Common myeloid progenitor, CD34-positive (primary cell): ENCODE measurements at regions of chr2 and their contacts with region 1.

Region 1: GRCh38 chr2:230762317-230762896 is 49.8 kb downstream of the CAB39 start:
- DNase-seq: peak; percentile 39 to 49 (median 44)
- H3K4me3 ChIP-seq: no peak overlapping the region
- H3K27ac ChIP-seq: no peak overlapping the region
- H3K4me1 ChIP-seq: peaks cover 5 to 25% (median 13%) of the 10 kb centered on the region in 4 experiments
- H3K27me3 ChIP-seq: no peaks in the 10 kb centered on the region

Region 2: DNA sequence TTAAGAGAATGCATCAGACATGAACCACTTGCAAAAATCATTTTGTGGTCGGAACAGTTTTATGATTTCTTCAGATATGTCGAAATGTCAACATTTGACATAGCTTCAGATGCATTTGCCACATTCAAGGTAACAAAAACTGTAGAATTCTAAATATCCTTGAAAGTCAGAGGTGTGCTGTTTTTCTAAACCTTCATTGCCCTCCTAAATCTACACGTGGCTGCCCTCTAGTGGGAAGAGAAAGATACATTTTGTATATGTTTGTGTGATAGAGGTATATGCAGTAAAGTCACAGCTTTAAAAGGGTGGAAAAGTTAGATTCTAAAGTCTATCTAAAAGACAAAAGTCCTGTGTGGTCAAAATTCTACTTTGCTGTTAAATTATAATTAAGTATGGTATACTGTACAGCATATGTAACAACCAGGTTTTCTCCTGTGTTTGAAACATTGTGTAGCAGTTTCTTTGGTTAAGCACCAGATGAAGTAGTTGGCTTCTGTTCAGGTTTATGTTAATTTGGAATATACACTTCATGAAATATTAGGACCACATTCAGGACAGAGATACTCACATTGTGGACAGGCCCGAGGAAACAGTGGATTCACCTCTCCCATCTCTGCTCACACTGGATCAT is 36.5 kb after region 1 on chr2:
- CTCF ChIA-PET with region 1: interaction called, 12 read pairs
- POLR2A ChIA-PET with region 1: no interaction called
- DNase-seq: peak; percentile 50 to 72 (median 63)
- H3K4me3 ChIP-seq: no peak overlapping the region
- H3K27ac ChIP-seq: no peak overlapping the region
- H3K4me1 ChIP-seq: peaks cover 7 to 25% (median 19%) of the 10 kb centered on the region in 4 experiments
- H3K27me3 ChIP-seq: no peaks in the 10 kb centered on the region

Region 3: DNA sequence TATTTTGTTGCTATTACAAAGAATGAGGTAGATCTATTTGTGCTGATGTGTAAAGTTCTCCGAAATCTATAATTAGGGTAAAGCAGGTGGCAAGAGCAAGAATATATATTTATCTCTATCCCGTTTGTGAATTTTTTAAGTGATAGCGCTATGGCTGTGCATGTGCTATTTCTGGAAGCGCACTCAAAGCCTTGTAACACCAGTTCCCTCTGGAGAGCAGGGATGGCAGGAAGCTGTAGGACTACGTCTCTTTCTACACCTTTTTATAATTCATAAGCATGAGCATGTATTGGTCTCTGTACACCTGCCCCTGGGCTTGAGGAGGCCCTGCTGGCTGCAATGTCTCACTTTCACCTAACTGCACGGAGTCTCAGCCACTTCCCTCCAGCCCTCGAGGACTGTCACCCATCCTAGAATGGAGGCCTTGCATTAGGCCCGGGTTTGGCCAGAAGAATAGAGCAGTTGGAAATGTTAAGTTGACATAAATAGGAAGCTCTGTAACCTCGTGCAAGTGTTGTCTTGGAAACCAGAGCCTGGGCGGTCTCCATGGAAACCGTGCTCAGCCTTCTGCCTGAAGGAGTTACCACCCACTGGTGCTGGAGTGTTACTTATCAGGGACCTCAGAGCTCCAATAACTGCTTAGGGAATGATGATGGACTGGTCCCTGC is 123.2 kb after region 1 on chr2:
- CTCF ChIA-PET with region 1: no interaction called
- POLR2A ChIA-PET with region 1: no interaction called
- DNase-seq: peak; percentile 87 to 96 (median 96)
- H3K4me3 ChIP-seq: peak overlapping the region in 1 of 7 experiments; percentile 4
- H3K27ac ChIP-seq: peak overlapping the region in 1 of 2 experiments; percentile 65
- H3K4me1 ChIP-seq: peaks cover 2 to 16% (median 12%) of the 10 kb centered on the region in 4 experiments
- H3K27me3 ChIP-seq: no peaks in the 10 kb centered on the region

Region 4: GRCh38 chr2:230956827-230957755 is 194.7 kb after region 1 on chr2:
- CTCF ChIA-PET with region 1: no interaction called
- POLR2A ChIA-PET with region 1: no interaction called
- DNase-seq: peak in 2 of 3 donors; percentile 10 to 37
- H3K4me3 ChIP-seq: peak overlapping the region in 5 of 7 experiments; percentile 33 to 67 (median 51)
- H3K27ac ChIP-seq: no peak overlapping the region
- H3K4me1 ChIP-seq: peaks cover 0 to 16% (median 10%) of the 10 kb centered on the region in 4 experiments
- H3K27me3 ChIP-seq: peaks cover 3 to 28% (median 12%) of the 10 kb centered on the region in 5 experiments